Activated CD8-positive, alpha-beta memory T cell treated with anti-CD3 and anti-CD28 coated beads, Interleukin-2, amount 10 ng/mL, durations not matched to agents 7 days and 5 days (primary cell): ENCODE measurements at regions of chr1 and their contacts with region 1.

Region 1: DNA sequence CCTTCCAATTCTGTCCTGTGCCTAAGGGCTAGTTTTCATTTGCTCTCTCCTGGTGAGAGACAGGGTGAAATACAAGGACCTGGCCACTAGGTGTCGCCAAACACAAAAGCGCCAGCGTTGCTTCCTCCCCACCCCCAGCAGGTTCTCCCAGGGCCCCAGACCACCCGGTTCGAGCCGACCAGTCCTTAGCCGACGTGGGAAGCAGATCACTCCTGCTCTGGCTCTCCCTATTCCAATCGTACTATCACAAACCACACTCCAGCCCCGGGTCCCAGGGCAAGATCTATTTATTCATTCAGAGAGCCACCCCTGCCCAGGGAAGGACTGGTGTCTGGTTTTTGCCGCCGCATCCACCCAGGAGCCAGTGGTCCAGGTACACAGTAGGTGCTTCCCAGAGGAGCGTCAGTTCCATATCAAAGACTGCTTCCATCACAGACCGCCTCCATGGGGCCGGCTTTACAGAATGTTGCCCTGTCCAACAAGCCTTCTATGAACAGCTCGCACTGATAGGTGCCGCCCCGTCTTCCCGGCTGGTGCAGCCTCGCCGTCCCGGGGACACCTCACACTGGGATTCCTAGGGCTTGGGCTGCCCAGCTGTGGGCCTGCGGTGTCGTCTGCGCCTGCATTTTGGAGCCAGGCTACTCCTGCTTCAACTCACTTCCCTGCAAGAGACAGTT is 35.0 kb downstream of the CTNNBIP1 start:
- DNase-seq: peak; percentile 82
- ATAC-seq: peak; percentile 94
- H3K4me3 Mint-ChIP-seq: no peak overlapping the region
- H3K27ac Mint-ChIP-seq: peak overlapping the region; percentile 65
- H3K4me1 Mint-ChIP-seq: peaks cover 12% of the 10 kb centered on the region
- H3K27me3 Mint-ChIP-seq: no peaks in the 10 kb centered on the region

Region 2: DNA sequence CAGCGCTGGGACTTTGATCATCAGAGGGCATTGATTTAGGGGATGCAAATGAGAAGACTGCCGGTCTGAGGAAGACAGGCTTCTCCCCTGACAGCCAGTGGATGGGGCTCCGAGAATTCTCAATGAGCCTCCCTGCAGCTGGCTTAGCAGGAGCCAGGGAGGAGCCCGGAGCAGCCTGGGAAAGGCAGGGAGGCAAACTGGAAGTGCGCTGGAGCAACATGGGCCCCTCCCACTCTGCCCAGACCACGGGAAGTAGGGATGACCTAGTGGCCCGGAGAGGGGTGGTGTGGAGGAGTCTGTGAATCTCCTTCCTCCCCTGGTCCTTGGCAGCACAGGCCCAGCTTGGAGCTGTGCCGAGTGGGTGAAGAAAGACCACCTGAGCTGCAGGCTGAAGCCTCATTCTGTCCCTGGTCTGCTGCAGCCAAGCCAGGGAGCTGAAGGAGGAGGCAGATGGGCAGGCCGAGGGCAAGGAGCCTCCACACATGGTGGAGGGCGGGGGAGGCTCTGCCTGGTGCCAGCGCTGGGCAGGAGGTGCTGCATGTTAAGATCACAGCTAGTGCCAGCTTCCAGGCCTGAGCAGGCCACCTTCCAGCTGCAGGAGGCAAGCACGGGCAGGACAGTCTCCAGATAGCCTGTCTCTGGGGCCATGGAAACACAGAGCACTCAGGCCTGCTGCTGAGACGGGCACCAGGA is 39.2 kb before region 1 on chr1:
- CTCF ChIA-PET with region 1: no interaction called
- DNase-seq: no peak
- ATAC-seq: no peak
- H3K4me3 Mint-ChIP-seq: no peak overlapping the region
- H3K27ac Mint-ChIP-seq: no peak overlapping the region
- H3K4me1 Mint-ChIP-seq: no peaks in the 10 kb centered on the region
- H3K27me3 Mint-ChIP-seq: no peaks in the 10 kb centered on the region

Region 3: DNA sequence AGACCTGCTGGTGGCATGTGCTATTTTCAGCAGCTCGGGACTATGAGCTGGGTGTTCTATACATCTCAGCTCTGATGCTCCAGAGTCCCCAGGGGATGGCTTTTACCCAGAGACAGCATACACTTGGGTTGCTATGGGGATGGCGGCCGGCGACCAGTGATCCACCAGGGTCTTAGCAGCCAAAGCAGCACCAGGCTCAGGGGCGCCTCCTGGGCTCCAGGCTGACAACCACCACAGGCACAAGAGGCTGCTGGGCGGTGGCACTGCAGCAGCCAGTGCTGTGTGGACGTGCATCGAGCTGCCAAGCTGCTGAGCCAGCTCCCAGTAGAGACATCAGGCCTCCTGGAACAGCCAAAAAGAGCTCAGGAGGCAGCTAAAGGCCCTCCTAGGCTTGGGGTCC is 13.7 kb before region 1 on chr1:
- CTCF ChIA-PET with region 1: interaction called, 11 read pairs
- DNase-seq: no peak
- ATAC-seq: no peak
- H3K4me3 Mint-ChIP-seq: no peak overlapping the region
- H3K27ac Mint-ChIP-seq: no peak overlapping the region
- H3K4me1 Mint-ChIP-seq: peaks cover 10% of the 10 kb centered on the region
- H3K27me3 Mint-ChIP-seq: no peaks in the 10 kb centered on the region

Region 4: GRCh38 chr1:9890224-9890731 is 15.2 kb after region 1 on chr1:
- CTCF ChIA-PET with region 1: interaction called, 15 read pairs
- DNase-seq: no peak
- ATAC-seq: no peak
- H3K4me3 Mint-ChIP-seq: no peak overlapping the region
- H3K27ac Mint-ChIP-seq: no peak overlapping the region
- H3K4me1 Mint-ChIP-seq: peaks cover 15% of the 10 kb centered on the region
- H3K27me3 Mint-ChIP-seq: no peaks in the 10 kb centered on the region

Region 5: DNA sequence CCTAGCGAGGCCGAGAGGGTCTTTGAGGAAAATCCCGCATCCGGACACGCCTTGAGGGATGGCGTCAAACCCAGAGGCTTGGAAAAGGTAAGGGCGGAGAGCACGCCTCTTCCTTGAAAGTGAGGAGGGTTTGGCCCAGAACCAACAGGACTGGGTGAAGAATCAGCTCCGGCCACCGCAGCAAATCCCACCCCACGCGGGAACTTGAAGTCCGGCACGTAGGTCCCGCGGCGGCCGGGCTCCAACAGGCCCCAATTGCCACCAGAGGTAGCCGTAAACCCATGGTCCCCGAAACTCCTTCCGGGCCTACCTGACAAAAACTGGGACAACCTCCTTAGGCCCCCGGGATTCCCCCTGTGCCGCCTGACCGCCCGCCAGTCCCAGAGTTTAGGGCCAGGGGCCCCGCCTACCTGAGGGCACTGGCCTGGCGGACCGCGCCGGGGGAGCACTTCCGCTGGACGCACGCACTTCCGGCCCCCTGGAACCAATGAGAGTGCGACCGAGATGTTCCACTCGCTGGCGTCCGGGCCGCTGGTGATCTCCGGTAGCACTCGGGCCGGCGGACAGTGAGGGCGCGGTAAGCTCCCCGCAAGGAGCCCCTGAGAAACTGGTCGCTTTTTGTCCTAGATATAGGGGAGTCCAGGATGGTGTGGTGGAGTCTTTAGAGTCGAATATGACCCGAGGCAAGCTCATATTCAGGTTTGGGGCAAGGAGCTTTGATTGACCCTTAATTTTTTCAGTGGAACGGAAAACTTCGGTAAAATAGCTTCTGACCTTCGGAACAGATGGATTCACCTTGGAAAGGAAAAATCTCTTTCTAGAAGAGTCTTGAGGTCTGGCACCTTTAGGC is 68.1 kb after region 1 on chr1 and contains the starts of genes LZIC and NMNAT1:
- CTCF ChIA-PET with region 1: interaction called, 19 read pairs
- DNase-seq: peak; percentile 95
- ATAC-seq: peak; percentile 99
- H3K4me3 Mint-ChIP-seq: peak within 1 kb of the TSS; percentile 92
- H3K27ac Mint-ChIP-seq: peak within 1 kb of the TSS; percentile 97
- H3K4me1 Mint-ChIP-seq: peaks cover 23% of the 10 kb centered on the region
- H3K27me3 Mint-ChIP-seq: no peaks in the 10 kb centered on the region
- total RNA-seq, gene LZIC: 25.0 to 27.7 TPM
- total RNA-seq, gene NMNAT1: 6.5 to 10.0 TPM